HEK293 (cell line): ENCODE measurements at regions of chr1 and their contacts with region 1.

Region 1: GRCh38 chr1:78607334-78607927 is 12.8 kb upstream of the IFI44L start:
- H3K4me3 ChIP-seq: no peak overlapping the region
- H3K27ac ChIP-seq: no peak overlapping the region
- H3K4me1 ChIP-seq: no peaks in the 10 kb centered on the region
- CTCF ChIP-seq: peak; percentile 14; the same call in 1 of the 2 replicates

Region 2: DNA sequence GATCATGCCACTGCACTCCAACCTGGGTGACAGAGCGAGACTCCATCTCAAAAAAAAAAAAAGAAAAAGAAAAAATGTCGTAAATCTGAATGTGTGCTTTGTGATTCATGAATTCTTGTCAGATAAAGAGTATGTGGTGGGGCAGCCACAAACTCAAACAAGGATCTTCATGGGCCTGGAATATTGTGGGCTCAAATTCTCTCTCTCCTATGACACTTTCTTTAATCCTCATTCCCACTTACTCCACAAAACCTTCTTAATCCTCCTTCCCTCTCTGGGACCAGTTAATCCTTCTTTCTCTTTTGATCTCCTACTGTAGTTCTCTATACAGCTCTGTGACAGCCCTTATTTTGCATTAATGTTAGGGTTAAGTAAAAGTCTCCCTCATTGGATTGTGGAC is 1213.3 kb before region 1 on chr1:
- CTCF ChIA-PET with region 1: no interaction called
- POLR2A ChIA-PET with region 1: no interaction called
- H3K4me3 ChIP-seq: no peak overlapping the region
- H3K27ac ChIP-seq: no peak overlapping the region
- H3K4me1 ChIP-seq: no peaks in the 10 kb centered on the region
- CTCF ChIP-seq: no peak

Region 3: GRCh38 chr1:78132174-78132947 is 475.1 kb before region 1 on chr1:
- CTCF ChIA-PET with region 1: interaction called, 33 read pairs
- POLR2A ChIA-PET with region 1: no interaction called
- H3K4me3 ChIP-seq: no peak overlapping the region
- H3K27ac ChIP-seq: no peak overlapping the region
- H3K4me1 ChIP-seq: no peaks in the 10 kb centered on the region
- CTCF ChIP-seq: no peak

Region 4: DNA sequence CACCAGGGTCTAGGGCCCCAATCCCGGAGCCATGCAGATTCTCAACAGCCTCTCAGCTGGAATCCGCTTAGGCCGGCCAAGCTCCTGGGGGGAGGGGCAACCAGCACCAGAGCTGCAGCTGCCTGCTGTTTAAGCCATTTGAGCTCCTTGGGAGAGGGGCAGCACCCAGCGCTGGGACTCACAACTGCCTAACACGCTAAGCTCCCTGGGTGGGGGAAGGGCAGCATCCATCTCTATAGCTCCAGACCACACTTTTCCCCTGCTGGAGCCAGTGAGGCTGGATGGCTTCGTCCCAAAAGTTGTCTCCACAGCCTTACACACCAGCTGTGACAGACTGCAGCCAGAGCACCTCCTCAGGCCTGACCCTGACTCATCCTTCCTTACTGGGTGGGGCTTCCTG is 123.5 kb before region 1 on chr1:
- CTCF ChIA-PET with region 1: no interaction called
- POLR2A ChIA-PET with region 1: no interaction called
- H3K4me3 ChIP-seq: no peak overlapping the region
- H3K27ac ChIP-seq: no peak overlapping the region
- H3K4me1 ChIP-seq: no peaks in the 10 kb centered on the region
- CTCF ChIP-seq: no peak

Region 5: DNA sequence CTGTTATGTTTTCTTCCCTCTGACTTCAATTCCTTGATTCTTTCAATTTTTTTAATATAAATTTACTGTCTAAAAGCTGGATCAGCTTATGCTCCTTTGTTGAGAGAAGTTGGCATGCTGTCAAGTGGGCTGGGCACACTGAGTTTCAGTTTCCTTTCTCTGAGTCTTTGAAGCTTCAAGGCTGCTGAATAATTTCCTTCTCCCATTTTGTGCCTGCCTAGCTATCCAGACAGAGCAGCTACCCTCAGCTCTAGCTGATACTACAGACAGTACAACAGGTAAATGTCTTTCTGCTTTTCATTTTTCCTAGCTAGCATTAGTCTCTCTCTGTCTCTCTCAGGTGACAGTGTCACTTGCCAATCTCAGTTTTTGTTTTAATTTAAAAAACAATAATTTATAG is 42.2 kb after region 1 on chr1 and contains the start of gene IFI44:
- CTCF ChIA-PET with region 1: no interaction called
- POLR2A ChIA-PET with region 1: no interaction called
- H3K4me3 ChIP-seq: no peak within 1 kb of the TSS
- H3K27ac ChIP-seq: no peak within 1 kb of the TSS
- H3K4me1 ChIP-seq: no peaks in the 10 kb centered on the region
- CTCF ChIP-seq: no peak

Region 6: GRCh38 chr1:78716186-78716585 is 108.8 kb after region 1 on chr1:
- CTCF ChIA-PET with region 1: no interaction called
- POLR2A ChIA-PET with region 1: no interaction called
- H3K4me3 ChIP-seq: no peak overlapping the region
- H3K27ac ChIP-seq: no peak overlapping the region
- H3K4me1 ChIP-seq: no peaks in the 10 kb centered on the region
- CTCF ChIP-seq: no peak

Region 7: GRCh38 chr1:78743626-78744025 is 136.2 kb after region 1 on chr1:
- CTCF ChIA-PET with region 1: interaction called, 10 read pairs
- POLR2A ChIA-PET with region 1: no interaction called
- H3K4me3 ChIP-seq: no peak overlapping the region
- H3K27ac ChIP-seq: no peak overlapping the region
- H3K4me1 ChIP-seq: no peaks in the 10 kb centered on the region
- CTCF ChIP-seq: no peak